CD4-positive, alpha-beta memory T cell (primary cell): ENCODE measurements at regions of chr16 and their contacts with region 1.

Region 1: DNA sequence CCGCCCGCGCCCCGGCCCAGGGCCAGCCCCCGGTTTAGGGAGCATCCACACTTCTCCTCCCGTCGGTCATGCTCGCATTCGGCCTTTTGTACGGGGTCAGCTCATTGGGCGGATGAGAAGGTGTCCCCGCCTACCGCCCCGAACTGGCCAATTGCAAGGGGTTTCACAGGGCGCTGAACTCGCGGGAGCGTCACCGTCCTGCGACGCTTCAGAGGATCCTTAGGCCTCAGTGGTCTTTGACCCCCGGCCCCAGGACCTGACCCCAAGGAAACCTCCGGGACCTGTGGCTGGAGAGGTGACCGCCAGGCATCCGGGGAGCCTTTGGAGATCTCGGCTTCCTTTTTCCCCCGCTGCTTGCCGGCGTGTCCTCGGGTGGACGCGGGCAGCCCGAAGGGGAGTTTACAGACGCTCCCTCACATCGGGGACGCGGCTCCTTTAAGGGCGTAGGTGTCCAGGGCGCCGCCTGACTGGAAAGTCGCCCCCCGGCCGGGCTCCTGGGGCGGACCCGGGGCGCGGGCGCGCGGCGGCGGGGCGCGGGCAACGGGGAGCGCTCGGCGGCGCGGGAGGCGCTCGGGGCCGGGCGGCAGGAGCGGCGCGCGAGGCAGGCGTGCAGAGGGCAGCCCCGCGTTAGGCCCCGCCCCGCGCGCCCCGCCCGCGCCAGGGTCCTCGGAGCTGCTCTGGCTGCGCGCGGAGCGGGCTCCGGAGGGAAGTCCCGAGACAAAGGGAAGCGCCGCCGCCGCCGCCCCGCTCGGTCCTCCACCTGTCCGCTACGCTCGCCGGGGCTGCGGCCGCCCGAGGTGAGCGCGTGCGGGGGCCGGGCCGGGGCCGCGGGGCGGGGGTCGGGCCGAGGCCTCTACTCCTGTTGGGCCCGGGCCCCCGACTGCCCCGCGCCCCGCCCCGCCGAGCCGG is at the start of gene UBE2I:
- DNase-seq: peak; percentile 96 to 100 (median 98)
- H3K4me3 ChIP-seq: peak within 1 kb of the TSS; percentile 85 to 97
- H3K4me3 Mint-ChIP-seq: peak within 1 kb of the TSS; percentile 89 to 100 (median 98)
- H3K27ac ChIP-seq: peak within 1 kb of the TSS; percentile 100
- H3K27ac Mint-ChIP-seq: peak within 1 kb of the TSS; percentile 99 to 100 (median 99)
- H3K4me1 ChIP-seq: peaks cover 39% of the 10 kb centered on the region
- H3K4me1 Mint-ChIP-seq: peaks cover 16 to 47% (median 35%) of the 10 kb centered on the region in 4 donors
- H3K27me3 ChIP-seq: no peaks in the 10 kb centered on the region
- H3K27me3 Mint-ChIP-seq: no peaks in the 10 kb centered on the region
- total RNA-seq, gene UBE2I: 170 to 177 TPM

Region 2: DNA sequence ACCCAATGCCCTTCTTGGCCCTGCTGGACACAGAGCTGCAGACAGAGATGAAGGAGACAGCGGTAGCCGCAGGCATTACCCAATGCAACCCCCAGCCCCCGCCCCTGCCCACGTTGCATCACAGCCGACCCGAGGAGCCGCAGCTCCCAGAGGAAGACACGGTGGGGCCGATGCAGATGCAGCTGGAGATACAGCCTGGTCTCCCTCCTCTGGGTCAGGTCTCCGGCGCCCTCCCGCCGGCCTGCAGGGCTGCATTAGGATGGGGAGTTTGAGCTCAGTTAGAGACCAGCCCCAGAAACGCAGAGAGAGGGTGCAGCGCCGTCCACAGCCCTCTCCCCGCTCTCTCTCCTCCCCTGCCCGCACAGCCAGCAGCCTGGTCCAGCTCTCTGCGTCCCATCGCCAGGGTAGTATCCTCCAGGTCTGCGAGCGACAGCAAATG is 19.1 kb before region 1 on chr16:
- CTCF ChIA-PET with region 1: no interaction called
- POLR2A ChIA-PET with region 1: no interaction called
- intact Hi-C with region 1: no loop called
- DNase-seq: no peak
- H3K4me3 ChIP-seq: no peak overlapping the region
- H3K4me3 Mint-ChIP-seq: no peak overlapping the region
- H3K27ac ChIP-seq: no peak overlapping the region
- H3K27ac Mint-ChIP-seq: no peak overlapping the region
- H3K4me1 ChIP-seq: no peaks in the 10 kb centered on the region
- H3K4me1 Mint-ChIP-seq: peaks cover 0 to 1% (median 0%) of the 10 kb centered on the region in 4 donors
- H3K27me3 ChIP-seq: peaks cover 14% of the 10 kb centered on the region
- H3K27me3 Mint-ChIP-seq: peaks cover 29 to 36% of the 10 kb centered on the region in 2 donors

Region 3: DNA sequence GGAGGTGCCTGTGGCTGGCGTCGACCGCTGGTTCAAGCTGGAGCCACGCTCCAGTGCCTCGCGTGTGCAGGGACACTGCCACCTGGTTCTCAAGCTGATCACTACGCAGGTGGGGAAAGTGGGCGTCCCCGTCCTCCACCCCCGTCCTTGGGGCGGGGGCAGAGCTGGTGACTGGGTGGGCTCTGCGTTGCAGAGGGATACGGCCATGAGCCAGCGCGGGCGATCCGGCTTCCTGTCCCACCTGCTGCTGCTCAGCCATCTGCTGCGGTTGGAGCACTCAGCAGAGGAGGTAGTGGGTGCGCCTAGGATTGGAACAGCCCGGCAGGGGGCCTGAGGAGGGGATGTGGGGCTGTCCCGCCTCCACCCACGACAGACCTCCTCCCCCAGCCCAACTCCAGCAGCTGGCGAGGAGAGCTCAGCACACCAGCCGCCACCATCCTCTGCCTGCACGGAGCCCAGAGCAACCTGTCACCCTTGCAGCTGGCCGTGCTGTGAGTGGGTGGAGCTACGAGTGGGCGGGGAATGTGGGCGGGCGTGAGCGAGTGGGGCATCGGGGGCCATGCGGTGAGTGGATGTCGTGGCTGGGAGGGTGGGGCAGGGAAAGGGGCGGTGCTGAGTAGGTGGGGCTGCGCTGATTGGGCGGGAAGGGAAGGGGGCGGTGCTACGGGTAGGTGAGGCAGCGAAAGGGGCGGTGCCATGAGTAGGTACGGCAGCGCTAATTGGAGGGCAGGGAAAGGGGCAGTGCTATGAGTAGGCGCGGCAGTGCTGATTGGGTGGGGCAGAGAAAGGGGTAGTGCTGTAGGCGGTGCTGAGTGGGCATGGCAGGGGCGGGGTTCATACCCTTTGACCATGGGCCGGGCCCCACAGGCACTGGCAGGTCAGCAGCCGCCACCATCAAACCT is 33.5 kb after region 1 on chr16:
- CTCF ChIA-PET with region 1: no interaction called
- POLR2A ChIA-PET with region 1: interaction called, 16 read pairs
- intact Hi-C with region 1: loop called (anchors 2 kb)
- DNase-seq: peak; percentile 93 to 99 (median 96)
- H3K4me3 ChIP-seq: peak overlapping the region in 1 of 2 donors; percentile 63
- H3K4me3 Mint-ChIP-seq: peak overlapping the region; percentile 66 to 83 (median 79)
- H3K27ac ChIP-seq: peak overlapping the region; percentile 15
- H3K27ac Mint-ChIP-seq: peak overlapping the region; percentile 7 to 85 (median 59)
- H3K4me1 ChIP-seq: peaks cover 19% of the 10 kb centered on the region
- H3K4me1 Mint-ChIP-seq: peaks cover 6 to 22% (median 15%) of the 10 kb centered on the region in 4 donors
- H3K27me3 ChIP-seq: no peaks in the 10 kb centered on the region
- H3K27me3 Mint-ChIP-seq: no peaks in the 10 kb centered on the region

Region 4: GRCh38 chr16:1420111-1420540 is 110.9 kb after region 1 on chr16:
- CTCF ChIA-PET with region 1: no interaction called
- POLR2A ChIA-PET with region 1: interaction called, 22 read pairs
- intact Hi-C with region 1: loop called (anchors 1 kb)
- DNase-seq: no peak
- H3K4me3 ChIP-seq: peak overlapping the region; percentile 64 to 78
- H3K4me3 Mint-ChIP-seq: peak overlapping the region; percentile 79 to 97 (median 92)
- H3K27ac ChIP-seq: peak overlapping the region; percentile 85
- H3K27ac Mint-ChIP-seq: peak overlapping the region; percentile 64 to 100 (median 91)
- H3K4me1 ChIP-seq: peaks cover 12% of the 10 kb centered on the region
- H3K4me1 Mint-ChIP-seq: peaks cover 5 to 29% (median 15%) of the 10 kb centered on the region in 4 donors
- H3K27me3 ChIP-seq: no peaks in the 10 kb centered on the region
- H3K27me3 Mint-ChIP-seq: peaks cover 0 to 3% of the 10 kb centered on the region in 2 donors

Region 5: GRCh38 chr16:1929578-1930337 is 620.5 kb after region 1 on chr16:
- CTCF ChIA-PET with region 1: no interaction called
- POLR2A ChIA-PET with region 1: no interaction called
- intact Hi-C with region 1: loop called (anchors 10 kb)
- DNase-seq: peak; percentile 82 to 92 (median 90)
- H3K4me3 ChIP-seq: peak overlapping the region in 1 of 2 donors; percentile 28
- H3K4me3 Mint-ChIP-seq: peak overlapping the region in 4 of 8 donors; percentile 39 to 68 (median 52)
- H3K27ac ChIP-seq: peak overlapping the region; percentile 13
- H3K27ac Mint-ChIP-seq: no peak overlapping the region
- H3K4me1 ChIP-seq: peaks cover 6% of the 10 kb centered on the region
- H3K4me1 Mint-ChIP-seq: peaks cover 2 to 4% (median 4%) of the 10 kb centered on the region in 4 donors
- H3K27me3 ChIP-seq: no peaks in the 10 kb centered on the region
- H3K27me3 Mint-ChIP-seq: no peaks in the 10 kb centered on the region